K562 (cell line): ENCODE measurements at regions of chr5 and their contacts with region 1.

Region 1: GRCh38 chr5:168486136-168486879 is at the start of gene RARS1:
- DNase-seq: peak; percentile 94 to 95 (median 94)
- ATAC-seq: peak; percentile 98
- H3K4me3 ChIP-seq: peak within 1 kb of the TSS; percentile 99
- H3K27ac ChIP-seq: peak within 1 kb of the TSS; percentile 74; the same call in 2 of the 3 replicates
- H3K4me1 ChIP-seq: peaks cover 0 to 2% of the 10 kb centered on the region in 2 experiments; a peak in 2 of 5 replicates
- H3K27me3 ChIP-seq: no peaks in the 10 kb centered on the region
- CTCF ChIP-seq: peak; percentile 94 to 97 (median 96)
- EP300 ChIP-seq: no peak
- POLR2A ChIP-seq: peak; percentile 98
- RAD21 ChIP-seq: peak; percentile 43 to 67; a peak in 3 of 4 replicates
- polyA plus RNA-seq, gene RARS1: 139 to 196 TPM

Region 2: DNA sequence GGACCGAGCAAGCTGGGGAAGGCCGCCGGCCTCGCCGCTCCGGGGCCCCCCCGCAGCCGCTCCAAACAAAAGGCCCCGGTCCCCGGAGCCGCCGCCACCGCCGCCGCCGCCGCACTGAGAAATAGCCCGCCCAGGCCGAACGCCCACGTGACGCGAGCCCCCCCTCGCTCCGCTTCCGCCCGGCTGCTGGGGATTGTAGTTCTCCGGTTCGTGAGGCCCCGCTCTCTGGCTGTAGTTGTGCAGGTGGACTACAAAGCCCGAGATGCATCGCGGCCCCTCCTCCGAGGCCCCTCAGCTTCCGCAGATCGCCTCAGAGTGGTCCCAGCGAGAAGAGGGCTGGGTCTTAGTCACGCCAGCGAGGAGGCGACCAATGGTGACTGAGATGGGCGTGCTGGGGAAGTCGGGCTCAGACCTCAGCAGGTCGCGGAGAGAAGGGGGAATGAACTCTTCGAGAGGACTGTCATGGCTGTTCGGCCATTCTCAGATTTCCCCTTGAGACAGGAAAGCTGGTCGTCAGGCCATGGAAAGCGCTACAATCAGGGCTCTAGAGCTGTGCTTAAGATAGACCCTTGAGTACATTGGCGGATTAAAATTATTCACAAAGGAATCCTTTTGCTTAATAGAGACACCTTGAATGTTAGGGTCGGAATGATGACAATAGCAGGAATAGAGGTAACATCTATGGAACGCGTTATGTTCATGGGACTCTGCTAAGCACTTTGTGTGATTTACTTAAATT is 93.3 kb after region 1 on chr5:
- CTCF ChIA-PET with region 1: no interaction called
- POLR2A ChIA-PET with region 1: no interaction called
- in situ Hi-C with region 1: no loop called
- intact Hi-C with region 1: loop called (anchors 5 kb)
- DNase-seq: peak; percentile 93 to 98 (median 95)
- ATAC-seq: peak; percentile 93
- H3K4me3 ChIP-seq: peak overlapping the region; percentile 95
- H3K27ac ChIP-seq: peak overlapping the region; percentile 95
- H3K4me1 ChIP-seq: peaks cover 23 to 26% of the 10 kb centered on the region in 2 experiments; a peak in 4 of 5 replicates
- H3K27me3 ChIP-seq: no peaks in the 10 kb centered on the region
- CTCF ChIP-seq: no peak
- EP300 ChIP-seq: peak; percentile 52; the same call in 1 of the 2 replicates
- POLR2A ChIP-seq: peak; percentile 93
- RAD21 ChIP-seq: 0 out of 4 replicates have a peak, but pooled peaks of 1 of the 2 experiments have one; percentile 7